Colonic mucosa (tissue), 4 donors: ENCODE measurements at regions of chr2 and their contacts with region 1.

Region 1: DNA sequence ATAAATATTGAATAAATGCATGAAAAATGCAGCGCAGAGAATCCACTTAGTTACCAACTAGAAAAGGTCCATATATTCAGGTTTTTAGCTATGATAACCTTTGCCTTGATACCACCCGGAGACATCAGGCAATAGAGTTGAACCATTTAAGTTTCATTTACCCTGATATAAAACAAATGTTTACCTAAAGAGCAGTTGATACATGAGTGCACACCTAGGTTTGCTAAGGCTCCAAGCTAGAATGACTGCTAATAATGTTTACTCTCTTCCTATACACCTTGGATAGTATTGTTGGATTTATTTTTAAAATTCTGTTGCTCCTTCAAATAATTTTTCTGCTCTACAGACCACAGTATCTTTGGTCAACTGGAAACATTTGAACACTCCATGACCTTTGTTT is 1463.6 kb downstream of the LRP1B start:
- DNase-seq: no peak
- H3K4me3 ChIP-seq: no peak overlapping the region
- H3K27ac ChIP-seq: no peak overlapping the region
- H3K4me1 ChIP-seq: no peaks in the 10 kb centered on the region
- H3K27me3 ChIP-seq: no peaks in the 10 kb centered on the region
- CTCF ChIP-seq: no peak

Region 2: DNA sequence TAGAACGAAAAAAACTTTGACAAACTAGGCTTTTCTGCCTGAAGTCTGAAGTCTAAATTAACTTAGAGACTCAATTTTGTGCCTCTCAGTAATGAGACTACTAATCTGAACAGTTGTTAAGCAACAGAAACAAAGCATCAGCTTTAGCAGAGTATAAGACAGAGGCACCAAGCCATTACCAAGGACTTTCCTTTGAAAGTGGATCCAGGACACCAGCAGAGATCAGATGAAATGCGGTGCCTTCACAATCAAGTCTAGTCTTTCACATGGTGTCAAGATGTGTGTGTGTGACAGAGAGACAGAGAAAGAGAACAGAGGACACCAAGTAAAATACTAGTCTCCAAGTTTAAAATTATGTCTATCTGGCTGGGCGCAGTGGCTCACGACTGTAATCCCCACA is 39.3 kb before region 1 on chr2:
- intact Hi-C with region 1: loop called (anchors 2 kb)
- DNase-seq: no peak
- H3K4me3 ChIP-seq: no peak overlapping the region
- H3K27ac ChIP-seq: no peak overlapping the region
- H3K4me1 ChIP-seq: no peaks in the 10 kb centered on the region
- H3K27me3 ChIP-seq: no peaks in the 10 kb centered on the region
- CTCF ChIP-seq: no peak

Region 3: GRCh38 chr2:142008135-142008744 is 1341.0 kb after region 1 on chr2:
- intact Hi-C with region 1: no loop called
- DNase-seq: no peak
- H3K4me3 ChIP-seq: no peak overlapping the region
- H3K27ac ChIP-seq: no peak overlapping the region
- H3K4me1 ChIP-seq: no peaks in the 10 kb centered on the region
- H3K27me3 ChIP-seq: no peaks in the 10 kb centered on the region
- CTCF ChIP-seq: no peak